ENCODE measurements at regions of chr2 and their contacts with region 1.

Region 1: GRCh38 chr2:191637182-191638078 is 40.5 kb upstream of the NABP1 start:
- DNase-seq: peak in 3 of 10 donors; percentile 20 to 34 (median 26)
- ATAC-seq: peak; percentile 96
- H3K4me3 Mint-ChIP-seq: peak overlapping the region; percentile 4 to 76 (median 50)
- H3K27ac Mint-ChIP-seq: peak overlapping the region; percentile 61 to 98 (median 73)
- H3K4me1 Mint-ChIP-seq: peaks cover 24 to 46% (median 39%) of the 10 kb centered on the region in 4 donors
- H3K27me3 Mint-ChIP-seq: no peaks in the 10 kb centered on the region

Region 2: DNA sequence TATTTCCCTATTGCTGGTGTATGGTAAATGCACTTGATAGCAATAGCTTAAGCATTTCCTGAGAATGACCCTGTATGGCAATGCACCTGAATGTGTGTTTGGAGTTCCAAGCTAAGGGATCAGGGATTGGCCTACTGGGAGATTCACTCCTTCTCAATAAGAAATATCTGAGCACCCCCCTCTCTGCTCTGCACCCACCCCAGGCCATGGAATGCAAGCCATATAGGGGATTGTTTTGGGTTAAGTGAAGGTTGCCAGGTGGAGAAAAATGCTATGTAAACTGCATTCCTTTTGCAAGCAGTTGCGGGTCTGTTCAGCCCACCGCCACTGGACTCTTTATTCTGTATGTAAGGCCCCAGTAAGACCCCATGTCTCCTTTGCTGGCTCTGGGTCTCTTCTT is 45.5 kb before region 1 on chr2:
- POLR2A ChIA-PET with region 1: no interaction called
- DNase-seq: no peak
- ATAC-seq: no peak
- H3K4me3 Mint-ChIP-seq: no peak overlapping the region
- H3K27ac Mint-ChIP-seq: no peak overlapping the region
- H3K4me1 Mint-ChIP-seq: no peaks in the 10 kb centered on the region
- H3K27me3 Mint-ChIP-seq: no peaks in the 10 kb centered on the region

Region 3: DNA sequence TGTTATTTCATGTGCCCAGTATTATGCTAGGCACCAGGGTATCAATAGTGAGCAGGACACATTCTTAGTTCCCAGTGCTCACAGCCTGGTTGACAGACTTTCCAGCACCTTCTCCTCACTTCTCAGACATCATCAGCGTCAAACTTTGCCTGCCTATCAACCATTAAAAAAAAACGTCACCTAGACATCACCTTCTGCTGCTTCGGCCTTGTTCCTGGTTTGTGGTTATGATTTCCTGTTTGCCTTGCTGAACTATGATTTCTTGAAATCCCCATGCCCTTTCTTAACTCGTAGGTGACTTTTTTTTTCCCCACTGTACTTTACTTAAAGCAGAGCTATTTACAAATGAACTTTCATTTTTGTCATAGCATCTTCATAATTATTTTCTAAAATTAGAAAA is 19.9 kb before region 1 on chr2:
- POLR2A ChIA-PET with region 1: interaction called, 11 read pairs
- DNase-seq: peak; percentile 6 to 86 (median 62)
- ATAC-seq: peak; percentile 97 to 98
- H3K4me3 Mint-ChIP-seq: peak overlapping the region; percentile 2 to 76 (median 52)
- H3K27ac Mint-ChIP-seq: peak overlapping the region; percentile 60 to 96 (median 89)
- H3K4me1 Mint-ChIP-seq: peaks cover 23 to 52% (median 39%) of the 10 kb centered on the region in 4 donors
- H3K27me3 Mint-ChIP-seq: no peaks in the 10 kb centered on the region